Ascending aorta (tissue), 2 donors: ENCODE measurements at regions of chr7 and their contacts with region 1.

Region 1: GRCh38 chr7:20598459-20599309 is 16.8 kb upstream of the ABCB5 start:
- DNase-seq: no peak
- H3K4me3 ChIP-seq: no peak overlapping the region
- H3K27ac ChIP-seq: no peak overlapping the region
- H3K4me1 ChIP-seq: no peaks in the 10 kb centered on the region
- H3K27me3 ChIP-seq: no peaks in the 10 kb centered on the region
- CTCF ChIP-seq: peak; percentile 72 to 81 (median 74)

Region 2: GRCh38 chr7:19713676-19714075 is 885.0 kb before region 1 on chr7:
- intact Hi-C with region 1: loop called (anchors 2 kb)
- DNase-seq: no peak
- H3K4me3 ChIP-seq: no peak overlapping the region
- H3K27ac ChIP-seq: no peak overlapping the region
- H3K4me1 ChIP-seq: peaks cover 0 to 3% of the 10 kb centered on the region in 2 donors
- H3K27me3 ChIP-seq: no peaks in the 10 kb centered on the region
- CTCF ChIP-seq: peak in 2 of 3 experiments; percentile 56 to 58

Region 3: GRCh38 chr7:19747740-19748339 is 850.8 kb before region 1 on chr7:
- intact Hi-C with region 1: loop called (anchors 5 kb)
- DNase-seq: no peak
- H3K4me3 ChIP-seq: no peak overlapping the region
- H3K27ac ChIP-seq: no peak overlapping the region
- H3K4me1 ChIP-seq: no peaks in the 10 kb centered on the region
- H3K27me3 ChIP-seq: no peaks in the 10 kb centered on the region
- CTCF ChIP-seq: peak; percentile 11 to 37 (median 23)

Region 4: GRCh38 chr7:20330240-20330927 is 268.3 kb before region 1 on chr7 and contains the start of gene ITGB8:
- intact Hi-C with region 1: loop called (anchors 10 kb)
- DNase-seq: peak; percentile 33 to 89
- H3K4me3 ChIP-seq: peak within 1 kb of the TSS; percentile 76 to 87
- H3K27ac ChIP-seq: peak within 1 kb of the TSS; percentile 83 to 86
- H3K4me1 ChIP-seq: peaks cover 0 to 2% of the 10 kb centered on the region in 2 donors
- H3K27me3 ChIP-seq: no peaks in the 10 kb centered on the region
- CTCF ChIP-seq: no peak
- total RNA-seq, gene ITGB8: 7.9 TPM